ENCODE measurements at regions of chr5 and their contacts with region 1.

Region 1: DNA sequence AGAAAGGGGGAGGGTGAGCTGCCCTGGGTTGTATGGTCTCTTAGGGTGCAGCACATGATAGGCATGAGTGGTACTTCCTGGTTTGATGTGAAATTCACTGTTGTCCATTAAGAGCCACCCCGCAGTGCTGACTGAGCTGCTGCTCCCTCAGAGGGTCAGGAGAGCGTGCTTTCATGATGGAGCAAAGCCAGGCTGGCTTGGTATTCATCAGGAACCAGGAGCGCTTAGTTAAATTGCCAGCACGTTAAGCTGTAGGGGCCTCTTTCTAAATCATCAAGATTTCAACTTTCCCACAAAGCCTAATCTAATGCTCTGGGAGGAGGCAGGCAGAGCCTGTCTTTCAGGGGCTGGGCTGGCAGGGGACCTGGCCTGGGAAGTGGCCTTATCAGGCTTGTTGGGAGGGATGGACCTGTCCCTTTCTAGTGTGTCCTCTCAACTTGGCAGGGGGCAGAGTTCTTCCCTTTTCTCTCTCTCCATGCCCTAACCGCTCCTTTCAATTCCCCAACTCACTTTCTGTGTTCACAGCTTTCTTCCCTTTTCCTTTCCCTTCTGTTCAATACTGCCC is 7.9 kb downstream of the CYSTM1 start:
- DNase-seq: peak; percentile 41
- H3K4me3 Mint-ChIP-seq: peak overlapping the region; percentile 12
- H3K27ac Mint-ChIP-seq: peak overlapping the region; percentile 5
- H3K4me1 Mint-ChIP-seq: peaks cover 45% of the 10 kb centered on the region
- H3K27me3 Mint-ChIP-seq: no peaks in the 10 kb centered on the region
- CTCF ChIP-seq: no peak

Region 2: DNA sequence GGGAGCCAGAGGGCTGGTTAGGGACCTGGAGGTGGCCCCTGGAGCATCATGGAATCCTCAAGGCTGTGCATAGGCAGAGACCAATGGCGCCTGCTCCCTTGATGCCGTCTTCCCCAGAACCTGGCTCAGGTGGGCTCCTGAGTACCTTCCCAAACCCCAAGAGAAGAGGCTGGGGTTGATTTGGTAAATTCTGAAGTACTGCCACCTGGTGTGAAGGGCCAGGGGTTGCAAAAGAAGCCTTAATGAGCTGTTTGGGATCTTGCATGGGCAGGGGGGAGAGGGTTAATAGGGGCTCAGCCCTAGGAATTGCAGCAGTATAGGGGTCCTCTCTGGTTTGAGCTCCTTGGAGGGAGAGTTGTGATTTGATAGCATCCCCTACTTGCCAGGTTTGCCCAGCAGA is 44.2 kb after region 1 on chr5:
- CTCF ChIA-PET with region 1: no interaction called
- intact Hi-C with region 1: loop called (anchors 5 kb)
- DNase-seq: no peak
- H3K4me3 Mint-ChIP-seq: no peak overlapping the region
- H3K27ac Mint-ChIP-seq: no peak overlapping the region
- H3K4me1 Mint-ChIP-seq: peaks cover 19% of the 10 kb centered on the region
- H3K27me3 Mint-ChIP-seq: no peaks in the 10 kb centered on the region
- CTCF ChIP-seq: no peak